H1 (cell line): ENCODE measurements at regions of chr1 and their contacts with region 1.

Region 1: DNA sequence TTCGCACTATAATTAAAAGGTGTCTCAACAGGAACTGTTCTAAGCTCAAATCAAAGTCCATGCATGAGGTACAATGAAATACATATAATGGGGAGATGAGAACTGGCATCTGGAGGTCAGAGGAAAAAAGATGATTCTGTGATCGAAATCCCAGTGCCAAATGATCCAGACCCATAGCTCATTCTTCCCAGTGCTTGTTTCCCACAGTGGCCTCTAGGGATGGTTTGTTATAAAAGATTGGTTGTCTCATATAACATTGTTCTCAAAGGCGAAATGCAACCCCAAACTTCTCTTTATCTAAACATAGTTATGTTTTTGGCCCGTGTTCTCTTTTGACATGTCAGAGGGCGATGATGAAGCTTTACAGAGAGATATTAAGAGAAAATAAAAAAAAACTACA is 234.7 kb upstream of the RRP15 start:
- DNase-seq: no peak
- H3K4me3 ChIP-seq: no peak overlapping the region
- H3K27ac ChIP-seq: no peak overlapping the region
- H3K4me1 ChIP-seq: peaks cover 2 to 6% (median 3%) of the 10 kb centered on the region in 4 experiments; a peak in 5 of 7 replicates
- H3K27me3 ChIP-seq: no peaks in the 10 kb centered on the region
- CTCF ChIP-seq: peak in 1 of 3 experiments; percentile 25; a peak in 1 of 4 replicates
- EP300 ChIP-seq: no peak
- POLR2A ChIP-seq: no peak
- RAD21 ChIP-seq: no peak

Region 2: GRCh38 chr1:217982331-217983050 is 67.9 kb before region 1 on chr1:
- CTCF ChIA-PET with region 1: no interaction called
- POLR2A ChIA-PET with region 1: no interaction called
- DNase-seq: no peak
- H3K4me3 ChIP-seq: no peak overlapping the region
- H3K27ac ChIP-seq: no peak overlapping the region
- H3K4me1 ChIP-seq: peaks cover 0 to 7% (median 1%) of the 10 kb centered on the region in 4 experiments; a peak in 2 of 7 replicates
- H3K27me3 ChIP-seq: no peaks in the 10 kb centered on the region
- CTCF ChIP-seq: no peak
- EP300 ChIP-seq: no peak
- POLR2A ChIP-seq: no peak
- RAD21 ChIP-seq: no peak

Region 3: GRCh38 chr1:218031901-218032300 is 18.5 kb before region 1 on chr1:
- CTCF ChIA-PET with region 1: interaction called, 15 read pairs
- POLR2A ChIA-PET with region 1: no interaction called
- DNase-seq: no peak
- H3K4me3 ChIP-seq: no peak overlapping the region
- H3K27ac ChIP-seq: no peak overlapping the region
- H3K4me1 ChIP-seq: peaks cover 0 to 20% (median 2%) of the 10 kb centered on the region in 4 experiments; a peak in 4 of 7 replicates
- H3K27me3 ChIP-seq: no peaks in the 10 kb centered on the region
- CTCF ChIP-seq: no peak
- EP300 ChIP-seq: no peak
- POLR2A ChIP-seq: no peak
- RAD21 ChIP-seq: no peak